Heart left ventricle (tissue), 16 donors: ENCODE measurements at regions of chr5 and their contacts with region 1.

Region 1: DNA sequence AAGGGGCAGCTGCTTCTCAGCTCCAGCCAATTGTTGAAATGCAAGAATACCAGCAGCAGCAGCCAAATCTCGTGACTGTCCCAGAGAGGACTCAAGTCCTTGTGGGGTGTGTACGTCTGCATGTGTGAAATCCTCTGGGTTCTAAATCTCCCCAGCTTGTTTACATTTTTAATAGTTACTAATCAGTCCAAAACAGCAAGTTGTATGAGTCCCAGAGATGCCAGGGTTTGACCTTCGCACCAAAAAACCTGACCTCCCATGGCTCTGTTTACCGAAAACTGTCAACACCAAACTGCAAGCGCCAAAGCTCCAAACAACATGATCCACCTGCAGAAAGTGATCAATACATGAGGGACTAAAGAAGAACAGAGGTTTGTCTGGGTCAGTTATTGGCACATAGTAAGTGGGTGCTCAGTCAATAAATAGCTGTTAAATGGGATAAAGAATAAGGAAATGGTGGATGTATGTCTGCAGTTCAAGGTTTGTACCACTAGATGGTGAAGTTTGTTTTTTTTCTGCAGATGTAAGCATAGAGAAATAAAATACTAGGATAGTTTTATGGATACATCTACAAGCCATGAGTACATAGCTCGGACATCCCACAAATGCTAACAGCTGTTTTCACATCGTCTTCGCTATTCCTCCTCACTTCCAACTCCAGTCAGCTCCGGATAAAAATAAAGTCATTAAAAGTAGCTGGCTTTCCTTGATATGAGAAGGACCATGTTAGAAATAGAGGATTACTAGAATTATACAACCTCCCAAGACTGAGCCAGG is 85.3 kb upstream of the ADRB2 start:
- DNase-seq: peak in 1 of 5 donors; percentile 43
- ATAC-seq: peak; percentile 55 to 78 (median 74)
- H3K4me3 ChIP-seq: no peak overlapping the region
- H3K27ac ChIP-seq: peak overlapping the region in 1 of 12 donors; percentile 12
- H3K4me1 ChIP-seq: peaks cover 0 to 33% (median 13%) of the 10 kb centered on the region in 12 donors
- H3K27me3 ChIP-seq: no peaks in the 10 kb centered on the region
- CTCF ChIP-seq: peak; percentile 63 to 81 (median 75)
- POLR2A ChIP-seq: no peak

Region 2: DNA sequence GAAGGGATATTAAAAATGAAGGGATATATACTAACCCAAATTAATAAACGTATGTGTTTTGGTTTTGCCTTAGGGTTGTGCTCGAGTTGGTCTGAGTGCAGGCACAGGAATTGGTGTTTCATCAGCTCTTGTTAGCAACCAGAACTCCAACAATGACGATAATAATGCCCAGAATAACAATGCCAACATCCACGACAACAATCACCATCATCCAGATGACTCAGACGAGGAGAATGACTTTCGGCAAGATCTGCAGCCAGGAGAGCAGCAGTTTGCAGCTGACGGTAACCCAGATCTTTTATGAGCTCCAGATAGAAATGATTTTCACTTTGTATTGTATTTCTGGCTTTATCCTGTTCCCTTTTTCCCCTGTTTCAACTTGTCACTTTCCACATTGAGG is 324.2 kb before region 1 on chr5:
- intact Hi-C with region 1: no loop called
- DNase-seq: peak in 3 of 5 donors; percentile 17 to 42 (median 21)
- ATAC-seq: peak; percentile 53 to 82 (median 76)
- H3K4me3 ChIP-seq: no peak overlapping the region
- H3K27ac ChIP-seq: peak overlapping the region; percentile 0 to 79 (median 72)
- H3K4me1 ChIP-seq: peaks cover 0 to 33% (median 7%) of the 10 kb centered on the region in 12 donors
- H3K27me3 ChIP-seq: no peaks in the 10 kb centered on the region
- CTCF ChIP-seq: no peak
- POLR2A ChIP-seq: no peak

Region 3: GRCh38 chr5:148805326-148806290 is 64.5 kb after region 1 on chr5:
- intact Hi-C with region 1: loop called in 2 of 10 experiments (anchors 5 kb)
- DNase-seq: peak in 4 of 5 donors; percentile 44 to 81 (median 62)
- ATAC-seq: peak; percentile 94 to 97 (median 96)
- H3K4me3 ChIP-seq: no peak overlapping the region
- H3K27ac ChIP-seq: peak overlapping the region; percentile 32 to 83 (median 68)
- H3K4me1 ChIP-seq: peaks cover 0 to 66% (median 20%) of the 10 kb centered on the region in 12 donors
- H3K27me3 ChIP-seq: no peaks in the 10 kb centered on the region
- CTCF ChIP-seq: no peak
- POLR2A ChIP-seq: peak in 1 of 2 donors; percentile 23

Region 4: GRCh38 chr5:148957591-148958202 is 216.5 kb after region 1 on chr5:
- intact Hi-C with region 1: loop called in 8 of 10 experiments (anchors 2 to 5 kb)
- DNase-seq: peak in 3 of 5 donors; percentile 20 to 47 (median 29)
- ATAC-seq: peak in 2 of 4 donors; percentile 43 to 53
- H3K4me3 ChIP-seq: no peak overlapping the region
- H3K27ac ChIP-seq: no peak overlapping the region
- H3K4me1 ChIP-seq: peaks cover 0 to 12% (median 0%) of the 10 kb centered on the region in 12 donors
- H3K27me3 ChIP-seq: no peaks in the 10 kb centered on the region
- CTCF ChIP-seq: peak; percentile 69 to 88 (median 80)
- POLR2A ChIP-seq: no peak

Region 5: GRCh38 chr5:148963664-148964063 is 222.5 kb after region 1 on chr5:
- intact Hi-C with region 1: loop called in 7 of 10 experiments (anchors 2 to 5 kb)
- DNase-seq: no peak
- ATAC-seq: peak in 1 of 4 donors; percentile 33
- H3K4me3 ChIP-seq: no peak overlapping the region
- H3K27ac ChIP-seq: peak overlapping the region in 2 of 12 donors; percentile 22 to 76
- H3K4me1 ChIP-seq: peaks cover 0 to 43% (median 11%) of the 10 kb centered on the region in 12 donors
- H3K27me3 ChIP-seq: no peaks in the 10 kb centered on the region
- CTCF ChIP-seq: no peak
- POLR2A ChIP-seq: no peak

Region 6: GRCh38 chr5:148998174-148998797 is 257.1 kb after region 1 on chr5:
- intact Hi-C with region 1: loop called in 8 of 10 experiments (anchors 2 to 5 kb)
- DNase-seq: peak in 1 of 5 donors; percentile 28
- ATAC-seq: peak in 3 of 4 donors; percentile 47 to 69 (median 69)
- H3K4me3 ChIP-seq: no peak overlapping the region
- H3K27ac ChIP-seq: no peak overlapping the region
- H3K4me1 ChIP-seq: peaks cover 0 to 28% (median 6%) of the 10 kb centered on the region in 12 donors
- H3K27me3 ChIP-seq: no peaks in the 10 kb centered on the region
- CTCF ChIP-seq: peak; percentile 57 to 77 (median 68)
- POLR2A ChIP-seq: no peak

Region 7: DNA sequence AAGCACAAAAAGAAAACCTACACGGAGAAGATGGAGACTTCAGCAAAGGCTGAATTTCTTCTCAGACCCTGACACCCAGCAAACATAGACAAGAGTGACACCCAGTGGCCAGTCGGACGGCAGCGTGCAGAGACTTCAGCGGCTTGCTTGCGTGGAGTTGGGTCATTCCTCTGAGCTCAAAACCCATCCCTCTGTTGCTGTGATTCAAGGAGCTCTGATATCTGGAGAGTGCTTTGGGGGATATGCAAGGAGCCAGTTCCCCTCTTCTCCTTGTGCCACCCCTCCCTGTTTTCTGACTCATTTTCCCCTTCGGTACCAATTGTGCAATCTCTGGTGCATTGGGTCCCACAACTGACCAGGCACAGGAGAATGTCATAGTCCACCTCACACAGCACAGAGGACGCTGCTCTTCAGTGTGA is 294.2 kb after region 1 on chr5:
- intact Hi-C with region 1: loop called in 2 of 10 experiments (anchors 5 kb)
- DNase-seq: peak; percentile 71 to 88 (median 77)
- ATAC-seq: peak; percentile 82 to 94 (median 91)
- H3K4me3 ChIP-seq: no peak overlapping the region
- H3K27ac ChIP-seq: no peak overlapping the region
- H3K4me1 ChIP-seq: peaks cover 0 to 39% (median 8%) of the 10 kb centered on the region in 12 donors
- H3K27me3 ChIP-seq: no peaks in the 10 kb centered on the region
- CTCF ChIP-seq: peak; percentile 69 to 91 (median 86)
- POLR2A ChIP-seq: no peak